ENCODE measurements at regions of chr17 and their contacts with region 1.

Region 1: DNA sequence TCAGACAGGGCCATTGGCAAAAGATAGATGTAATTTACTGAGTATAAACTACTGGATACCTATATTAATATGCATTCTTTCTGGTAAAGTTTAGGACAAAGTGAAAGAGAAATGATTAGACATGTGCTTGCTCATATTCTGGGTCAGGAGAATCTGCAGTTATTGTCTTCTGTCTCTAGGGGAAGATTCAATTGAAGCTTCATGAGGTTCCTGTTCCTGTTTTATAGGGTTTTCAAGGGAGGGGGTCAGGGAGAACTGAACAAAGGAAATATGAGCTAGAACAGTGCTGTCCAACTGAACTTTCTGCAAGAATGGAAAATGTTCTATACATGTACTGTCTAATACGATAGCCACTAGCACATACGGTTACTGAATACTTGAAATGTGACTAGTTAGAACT is 59.3 kb upstream of the CORO6 start:
- DNase-seq: no peak
- ATAC-seq: peak in 3 of 4 donors; percentile 35 to 57 (median 44)
- H3K4me3 ChIP-seq: no peak overlapping the region
- H3K27ac ChIP-seq: peak overlapping the region; percentile 36 to 87 (median 65)
- H3K4me1 ChIP-seq: peaks cover 0 to 71% (median 41%) of the 10 kb centered on the region in 12 donors
- H3K27me3 ChIP-seq: no peaks in the 10 kb centered on the region
- CTCF ChIP-seq: peak in 2 of 12 donors; percentile 18 to 19
- POLR2A ChIP-seq: no peak

Region 2: DNA sequence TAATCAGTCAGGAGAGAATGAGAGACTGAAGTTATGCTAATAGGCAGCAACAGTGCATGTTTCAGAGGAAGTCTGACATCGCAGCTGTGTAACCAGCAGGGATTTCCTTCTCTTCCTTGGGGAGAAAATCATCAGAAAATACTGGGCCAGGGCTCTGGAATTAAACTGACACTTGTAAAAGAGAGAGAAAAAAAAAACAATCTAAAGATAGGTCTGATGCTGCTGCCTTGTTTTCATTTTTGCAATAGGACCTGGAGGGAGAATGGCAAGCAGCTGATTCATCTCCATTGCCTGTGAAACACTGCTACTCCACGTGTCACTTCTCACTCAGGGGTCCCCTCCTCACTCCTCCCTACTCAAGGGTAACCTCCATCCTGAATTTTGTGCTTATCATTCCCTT is 41.6 kb before region 1 on chr17:
- intact Hi-C with region 1: loop called in 2 of 10 experiments (anchors 5 kb)
- DNase-seq: no peak
- ATAC-seq: peak in 3 of 4 donors; percentile 6 to 30 (median 15)
- H3K4me3 ChIP-seq: no peak overlapping the region
- H3K27ac ChIP-seq: peak overlapping the region; percentile 60 to 83 (median 76)
- H3K4me1 ChIP-seq: peaks cover 11 to 69% (median 66%) of the 10 kb centered on the region in 12 donors
- H3K27me3 ChIP-seq: no peaks in the 10 kb centered on the region
- CTCF ChIP-seq: no peak
- POLR2A ChIP-seq: no peak

Region 3: DNA sequence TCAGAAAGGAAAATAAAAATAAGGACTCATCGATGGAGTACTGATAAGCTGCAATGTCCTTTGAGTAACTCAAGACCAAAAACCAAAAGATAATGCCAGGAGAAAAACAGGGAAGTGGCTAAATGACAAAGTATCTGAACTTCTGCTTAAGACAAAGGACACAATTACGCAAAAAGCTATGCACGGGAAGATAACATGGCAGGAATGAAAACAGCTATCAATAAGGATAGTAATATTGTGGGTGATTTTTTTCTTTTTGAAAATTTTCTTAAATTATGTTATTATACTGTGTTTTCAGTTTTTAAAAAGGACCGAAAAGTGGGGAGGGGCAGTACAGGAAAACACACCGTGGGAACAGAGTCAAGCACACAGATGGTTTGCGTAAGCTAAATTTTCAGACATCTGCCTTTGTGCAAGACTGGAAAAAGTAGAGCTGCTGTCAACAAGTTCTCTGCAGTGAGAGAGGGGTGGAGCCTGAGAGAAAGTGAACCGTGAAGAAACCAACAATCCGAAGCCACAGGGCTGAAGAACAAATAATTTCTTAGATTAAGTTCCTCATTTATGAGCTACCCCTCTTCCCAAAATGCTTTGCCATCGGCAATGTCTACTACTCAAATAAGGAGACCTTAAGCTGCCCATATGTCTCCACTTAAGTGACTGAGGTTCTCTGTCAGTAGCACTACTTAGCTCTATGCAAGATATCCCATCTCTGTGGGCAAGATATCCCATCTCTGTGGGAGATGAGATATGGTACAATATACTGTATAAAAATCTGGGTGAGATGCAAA is 40.6 kb after region 1 on chr17:
- intact Hi-C with region 1: loop called in 2 of 10 experiments (anchors 5 kb)
- DNase-seq: peak in 4 of 5 donors; percentile 62 to 72 (median 67)
- ATAC-seq: peak; percentile 79 to 94 (median 90)
- H3K4me3 ChIP-seq: peak overlapping the region in 9 of 12 donors; percentile 7 to 51 (median 25)
- H3K27ac ChIP-seq: peak overlapping the region; percentile 75 to 89 (median 82)
- H3K4me1 ChIP-seq: peaks cover 2 to 94% (median 52%) of the 10 kb centered on the region in 12 donors
- H3K27me3 ChIP-seq: no peaks in the 10 kb centered on the region
- CTCF ChIP-seq: no peak
- POLR2A ChIP-seq: no peak

Region 4: DNA sequence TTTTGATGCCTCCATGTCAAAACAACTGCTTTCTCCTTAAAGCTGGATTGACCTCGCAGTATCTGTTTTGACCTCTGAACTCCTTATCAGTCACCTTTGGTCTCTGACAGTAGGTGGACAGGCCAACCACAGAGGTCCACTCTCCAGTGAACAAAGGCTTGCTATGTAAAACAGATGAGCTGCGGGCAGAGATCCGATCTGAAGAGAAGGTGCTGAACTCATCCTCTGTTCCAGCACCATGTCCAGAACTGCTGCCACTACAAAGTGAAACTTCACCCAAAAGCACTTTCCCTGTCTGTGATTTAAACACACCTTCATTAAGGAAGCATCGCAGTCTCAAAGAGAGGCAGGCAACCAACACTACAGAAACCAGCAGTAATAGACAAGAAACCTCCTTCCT is 58.0 kb after region 1 on chr17:
- intact Hi-C with region 1: loop called in 2 of 10 experiments (anchors 10 kb)
- DNase-seq: no peak
- ATAC-seq: peak in 1 of 4 donors; percentile 2
- H3K4me3 ChIP-seq: no peak overlapping the region
- H3K27ac ChIP-seq: peak overlapping the region in 11 of 12 donors; percentile 1 to 71 (median 48)
- H3K4me1 ChIP-seq: peaks cover 0 to 59% (median 47%) of the 10 kb centered on the region in 12 donors
- H3K27me3 ChIP-seq: no peaks in the 10 kb centered on the region
- CTCF ChIP-seq: no peak
- POLR2A ChIP-seq: no peak

Region 5: DNA sequence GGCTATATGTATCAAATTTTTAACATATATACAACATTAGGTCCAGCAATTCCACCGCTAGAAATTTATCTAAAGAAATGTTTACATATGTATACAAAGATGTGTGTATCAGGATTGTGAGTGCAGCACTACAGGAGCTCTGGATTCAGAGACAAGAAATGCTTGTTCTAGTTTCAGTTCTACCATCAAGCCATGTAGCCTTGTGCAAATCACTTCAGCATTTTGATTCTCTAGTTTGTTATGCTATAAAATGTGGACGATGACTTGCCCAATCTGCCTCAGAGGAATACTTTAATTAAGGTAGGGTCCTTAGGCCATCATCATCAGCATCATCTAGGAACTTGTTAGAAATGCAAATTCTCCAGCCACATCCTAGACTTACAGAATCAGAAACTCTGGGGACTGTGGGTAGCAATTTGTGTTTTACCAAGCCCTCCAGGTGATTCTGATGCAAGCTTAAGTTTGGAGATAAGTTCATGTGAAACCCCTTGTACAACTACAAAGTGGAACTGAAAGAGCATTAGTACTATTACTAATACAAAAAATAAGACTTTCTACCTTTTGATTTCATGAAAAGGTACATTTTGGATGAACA is 71.9 kb after region 1 on chr17:
- intact Hi-C with region 1: loop called in 3 of 10 experiments (anchors 10 kb)
- DNase-seq: no peak
- ATAC-seq: no peak
- H3K4me3 ChIP-seq: no peak overlapping the region
- H3K27ac ChIP-seq: peak overlapping the region in 1 of 12 donors; percentile 17
- H3K4me1 ChIP-seq: peaks cover 0 to 35% (median 11%) of the 10 kb centered on the region in 12 donors
- H3K27me3 ChIP-seq: no peaks in the 10 kb centered on the region
- CTCF ChIP-seq: no peak
- POLR2A ChIP-seq: no peak

Region 6: DNA sequence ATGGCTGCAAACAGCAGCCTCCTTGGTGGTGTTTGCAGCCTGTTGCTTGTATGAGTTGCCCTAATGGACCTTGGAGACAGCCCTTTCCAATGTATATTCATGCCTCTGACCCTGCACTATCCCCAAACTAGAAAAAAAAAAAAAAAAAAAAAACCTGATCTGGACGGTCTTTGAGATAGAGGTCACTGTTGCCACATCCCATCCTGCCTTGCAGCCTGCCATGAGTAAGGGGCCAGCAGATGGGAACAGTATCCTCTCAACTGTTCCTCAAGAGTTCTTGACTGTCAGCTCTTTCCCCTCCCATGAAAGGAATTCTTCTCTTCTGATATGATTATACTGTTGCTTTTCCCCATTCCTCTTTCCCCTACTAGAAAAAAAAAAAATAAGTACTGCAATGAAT is 95.6 kb after region 1 on chr17:
- intact Hi-C with region 1: loop called in 1 of 10 experiments (anchors 5 kb)
- DNase-seq: no peak
- ATAC-seq: no peak
- H3K4me3 ChIP-seq: no peak overlapping the region
- H3K27ac ChIP-seq: no peak overlapping the region
- H3K4me1 ChIP-seq: peaks cover 0 to 21% (median 8%) of the 10 kb centered on the region in 12 donors
- H3K27me3 ChIP-seq: no peaks in the 10 kb centered on the region
- CTCF ChIP-seq: no peak
- POLR2A ChIP-seq: no peak

Measured in heart left ventricle (tissue), 16 donors.